T-cell (primary cell): ENCODE measurements at regions of chr7 and their contacts with region 1.

Region 1: DNA sequence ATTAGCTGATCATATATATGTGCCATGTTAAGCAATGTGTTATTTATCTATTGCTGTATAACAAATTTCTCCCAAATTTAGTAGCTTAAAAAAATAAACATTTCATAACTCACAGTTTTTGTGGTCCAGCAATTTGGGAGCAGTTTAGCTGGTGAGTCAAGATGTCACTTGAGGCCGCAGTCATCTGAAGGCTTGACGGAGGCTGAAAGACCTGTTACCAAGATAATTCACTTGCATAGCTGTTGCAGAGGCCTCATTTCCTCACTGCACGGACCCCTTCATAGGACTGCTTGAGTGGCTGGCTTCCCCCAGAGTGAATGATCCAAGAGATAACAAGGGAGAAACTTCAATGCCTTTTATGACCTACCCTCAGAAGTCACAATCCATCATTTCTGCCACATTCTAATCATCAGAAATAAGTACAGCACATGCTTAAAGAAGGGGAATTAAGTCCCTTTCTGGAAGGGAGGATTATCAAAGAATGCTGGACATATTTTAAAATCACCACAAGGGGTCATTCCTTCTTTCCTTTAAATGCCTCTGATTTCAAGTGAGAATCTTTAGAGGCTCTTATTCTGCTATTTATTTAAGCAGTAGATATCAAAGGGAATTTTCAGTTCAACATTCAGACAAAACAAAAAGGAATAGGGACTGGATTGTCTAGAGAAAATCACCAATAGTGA is 10.5 kb upstream of the SRPK2 start:
- DNase-seq: no peak
- ATAC-seq: no peak
- H3K4me3 ChIP-seq: no peak overlapping the region
- H3K4me3 Mint-ChIP-seq: no peak overlapping the region
- H3K27ac ChIP-seq: no peak overlapping the region
- H3K27ac Mint-ChIP-seq: no peak overlapping the region
- H3K4me1 ChIP-seq: no peaks in the 10 kb centered on the region
- H3K4me1 Mint-ChIP-seq: peaks cover 2 to 6% (median 3%) of the 10 kb centered on the region in 3 donors
- H3K27me3 ChIP-seq: no peaks in the 10 kb centered on the region
- H3K27me3 Mint-ChIP-seq: no peaks in the 10 kb centered on the region

Region 2: DNA sequence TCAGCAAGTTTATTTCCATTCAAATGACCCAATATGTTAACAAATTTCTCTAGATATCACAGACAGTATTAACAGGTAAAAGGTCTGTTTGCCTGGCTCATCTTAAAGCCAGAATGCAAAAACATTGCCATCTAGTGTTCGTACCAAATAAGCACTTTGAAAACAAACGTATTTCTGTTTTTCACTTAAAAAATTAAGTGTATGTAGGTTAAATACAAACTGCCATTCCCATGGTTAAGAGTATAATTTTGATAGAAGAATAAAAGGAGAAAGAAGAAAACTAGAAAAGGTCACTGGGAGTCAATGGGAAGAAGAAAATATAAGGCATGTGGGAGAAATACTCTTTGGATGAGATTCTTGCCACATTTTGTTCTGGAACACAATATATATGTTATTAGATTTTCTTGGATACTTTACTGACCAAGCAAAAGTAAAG is 1242.3 kb before region 1 on chr7:
- CTCF ChIA-PET with region 1: no interaction called
- POLR2A ChIA-PET with region 1: no interaction called
- DNase-seq: peak in 1 of 35 experiments; percentile 14
- ATAC-seq: no peak
- H3K4me3 ChIP-seq: no peak overlapping the region
- H3K4me3 Mint-ChIP-seq: no peak overlapping the region
- H3K27ac ChIP-seq: no peak overlapping the region
- H3K27ac Mint-ChIP-seq: no peak overlapping the region
- H3K4me1 ChIP-seq: no peaks in the 10 kb centered on the region
- H3K4me1 Mint-ChIP-seq: peaks cover 0 to 6% (median 2%) of the 10 kb centered on the region in 3 donors
- H3K27me3 ChIP-seq: no peaks in the 10 kb centered on the region
- H3K27me3 Mint-ChIP-seq: no peaks in the 10 kb centered on the region

Region 3: DNA sequence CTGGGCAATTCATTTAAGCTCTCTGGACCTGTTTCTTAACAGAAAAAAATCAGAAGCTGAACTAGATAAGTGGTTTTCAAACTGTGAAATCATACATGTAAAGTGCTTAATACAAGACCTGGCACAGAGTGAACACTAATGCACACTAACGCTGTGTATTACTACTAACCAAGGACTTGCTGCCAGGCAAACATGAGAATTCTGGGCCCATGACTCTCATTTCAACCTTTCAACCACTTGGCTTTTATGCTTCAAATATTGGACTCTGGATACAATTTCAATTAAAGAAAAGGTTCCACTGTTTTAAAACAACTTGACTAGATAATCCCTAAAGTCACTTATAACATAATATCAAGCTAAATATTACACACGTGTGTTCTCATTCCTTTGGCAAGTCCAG is 83.8 kb before region 1 on chr7:
- CTCF ChIA-PET with region 1: interaction called in 1 of 2 experiments, 14 read pairs
- POLR2A ChIA-PET with region 1: no interaction called
- DNase-seq: no peak
- ATAC-seq: no peak
- H3K4me3 ChIP-seq: no peak overlapping the region
- H3K4me3 Mint-ChIP-seq: no peak overlapping the region
- H3K27ac ChIP-seq: no peak overlapping the region
- H3K27ac Mint-ChIP-seq: no peak overlapping the region
- H3K4me1 ChIP-seq: peaks cover 0 to 1% of the 10 kb centered on the region in 2 experiments
- H3K4me1 Mint-ChIP-seq: peaks cover 14 to 53% (median 52%) of the 10 kb centered on the region in 3 donors
- H3K27me3 ChIP-seq: no peaks in the 10 kb centered on the region
- H3K27me3 Mint-ChIP-seq: no peaks in the 10 kb centered on the region

Region 4: DNA sequence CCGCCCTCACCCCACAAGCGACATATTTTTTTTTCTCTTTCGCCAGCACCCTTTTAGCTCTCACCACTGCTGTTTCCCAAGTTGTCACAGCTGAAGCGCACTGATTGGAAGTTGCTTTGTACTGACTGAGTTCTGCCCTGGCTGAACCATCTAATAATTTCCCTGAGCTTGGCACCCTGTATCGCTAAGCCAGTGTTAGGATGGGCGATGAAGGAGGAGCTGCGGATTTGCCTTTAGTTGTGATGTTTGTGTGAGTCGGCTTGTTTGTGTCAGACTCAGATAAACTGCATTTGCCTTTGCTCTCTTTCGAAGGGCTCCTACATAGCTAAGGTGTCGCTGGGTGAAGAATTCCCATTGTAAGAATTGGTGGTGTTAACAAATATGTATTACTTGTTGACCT is 478.6 kb after region 1 on chr7:
- CTCF ChIA-PET with region 1: interaction called in 1 of 2 experiments, 12 read pairs
- POLR2A ChIA-PET with region 1: no interaction called
- DNase-seq: peak in 1 of 35 experiments; percentile 9
- ATAC-seq: no peak
- H3K4me3 ChIP-seq: peak overlapping the region; percentile 80 to 88
- H3K4me3 Mint-ChIP-seq: peak overlapping the region; percentile 86 to 91 (median 88)
- H3K27ac ChIP-seq: no peak overlapping the region
- H3K27ac Mint-ChIP-seq: peak overlapping the region; percentile 10 to 72
- H3K4me1 ChIP-seq: peaks cover 19 to 45% of the 10 kb centered on the region in 2 experiments
- H3K4me1 Mint-ChIP-seq: peaks cover 64 to 72% (median 66%) of the 10 kb centered on the region in 3 donors
- H3K27me3 ChIP-seq: no peaks in the 10 kb centered on the region
- H3K27me3 Mint-ChIP-seq: no peaks in the 10 kb centered on the region